Posterior vena cava (tissue), 2 donors: ENCODE measurements at regions of chr10 and their contacts with region 1.

Region 1: GRCh38 chr10:119616882-119617570 is 20.3 kb upstream of the TIAL1 start:
- DNase-seq: no peak

Region 2: GRCh38 chr10:119428789-119429188 is 188.2 kb before region 1 on chr10:
- intact Hi-C with region 1: no loop called
- DNase-seq: no peak

Region 3: GRCh38 chr10:120069700-120070099 is 452.7 kb after region 1 on chr10:
- intact Hi-C with region 1: loop called in 1 of 2 experiments (anchors 5 kb)
- DNase-seq: no peak

Region 4: DNA sequence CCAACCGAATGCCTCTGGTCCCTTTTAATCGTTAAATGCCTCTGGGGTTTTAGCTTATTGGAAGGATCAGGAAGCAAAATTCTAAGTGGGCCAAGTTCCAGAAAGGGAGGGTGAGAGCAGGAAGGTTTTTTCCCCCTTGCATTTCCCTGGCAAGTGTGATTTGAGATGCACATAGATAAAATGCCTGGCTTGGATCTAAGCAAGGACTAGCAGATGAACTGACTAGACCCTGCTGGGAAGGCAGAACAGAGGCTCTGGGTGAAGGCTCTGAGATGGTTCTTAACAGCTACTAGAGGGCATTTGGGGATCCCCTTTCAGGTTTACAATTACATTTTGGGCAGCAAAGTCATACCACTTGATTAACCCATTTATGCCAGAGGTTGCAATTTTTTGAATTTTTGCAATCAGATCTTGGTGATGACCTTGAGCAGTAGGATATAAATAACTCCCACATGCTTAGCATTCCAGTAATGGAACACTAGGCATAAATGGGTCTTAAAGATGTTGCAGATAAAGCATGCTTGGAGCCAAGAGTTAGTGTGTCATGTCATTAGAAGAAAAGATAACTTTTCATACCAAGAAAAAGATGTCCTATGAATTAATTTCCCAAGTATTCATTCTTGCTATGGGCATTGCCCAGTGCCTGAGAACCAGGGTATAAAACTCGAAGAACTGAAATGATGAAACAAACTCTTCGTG is 481.4 kb after region 1 on chr10:
- intact Hi-C with region 1: no loop called
- DNase-seq: no peak